Heart left ventricle (tissue), 16 donors: ENCODE measurements at regions of chr17 and their contacts with region 1.

Region 1: DNA sequence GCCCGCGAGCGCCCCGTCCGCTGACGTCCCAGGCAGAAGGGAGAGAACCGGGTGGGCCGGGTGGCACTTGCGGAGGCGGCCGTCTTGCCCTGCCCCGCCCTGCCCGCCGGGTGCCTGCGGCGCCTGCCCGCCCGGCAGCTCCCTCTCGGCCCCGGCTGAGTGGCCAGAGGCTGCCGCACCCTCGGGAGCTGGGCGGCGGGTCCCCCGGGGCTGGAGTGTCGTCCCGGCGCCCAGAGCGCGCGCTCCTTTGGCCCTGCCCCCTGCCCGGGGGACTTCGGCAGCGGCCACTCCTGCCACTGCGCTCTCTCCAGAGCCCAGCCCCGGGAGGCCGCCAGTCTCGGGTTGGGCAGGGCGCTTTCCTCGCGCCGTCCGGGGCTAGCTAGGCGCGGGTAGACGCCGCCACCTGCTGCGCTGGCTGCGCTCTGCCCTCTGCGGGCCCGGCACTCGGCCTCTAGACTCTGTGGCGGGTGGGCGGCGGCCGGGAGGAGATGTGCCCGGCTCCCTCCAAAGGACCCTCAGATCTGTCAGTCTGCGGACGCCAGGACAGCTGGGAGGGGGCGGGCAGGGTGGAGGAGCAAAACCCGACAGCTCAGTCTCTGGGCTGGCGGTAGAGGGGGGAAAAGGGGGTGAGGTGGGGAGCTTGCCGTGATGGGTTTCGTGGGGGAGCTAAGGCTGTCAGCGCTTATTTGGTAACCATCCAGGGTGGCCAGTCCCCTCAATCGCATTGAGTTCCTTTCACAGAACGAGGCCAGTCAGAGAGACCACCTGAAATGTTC is at the start of gene ST6GALNAC2:
- DNase-seq: peak; percentile 55 to 82 (median 78)
- ATAC-seq: peak; percentile 84 to 94 (median 94)
- H3K4me3 ChIP-seq: peak within 1 kb of the TSS; percentile 57 to 81 (median 64)
- H3K27ac ChIP-seq: peak within 1 kb of the TSS in 9 of 12 donors; percentile 5 to 68 (median 46)
- H3K4me1 ChIP-seq: peaks cover 0 to 25% (median 17%) of the 10 kb centered on the region in 12 donors
- H3K27me3 ChIP-seq: peaks cover 0 to 43% (median 3%) of the 10 kb centered on the region in 9 donors
- CTCF ChIP-seq: peak in 11 of 12 donors; percentile 15 to 65 (median 42)
- POLR2A ChIP-seq: no peak
- total RNA-seq, gene ST6GALNAC2: 3.3 to 7.8 (median 5.6) TPM

Region 2: GRCh38 chr17:76530095-76530718 is 55.8 kb before region 1 on chr17:
- intact Hi-C with region 1: no loop called
- DNase-seq: peak in 1 of 5 donors; percentile 91
- ATAC-seq: peak; percentile 33 to 65 (median 62)
- H3K4me3 ChIP-seq: peak overlapping the region in 5 of 12 donors; percentile 1 to 7 (median 4)
- H3K27ac ChIP-seq: peak overlapping the region; percentile 89 to 99 (median 95)
- H3K4me1 ChIP-seq: peaks cover 13 to 74% (median 48%) of the 10 kb centered on the region in 12 donors
- H3K27me3 ChIP-seq: no peaks in the 10 kb centered on the region
- CTCF ChIP-seq: no peak
- POLR2A ChIP-seq: peak in 1 of 2 donors; percentile 14

Region 3: DNA sequence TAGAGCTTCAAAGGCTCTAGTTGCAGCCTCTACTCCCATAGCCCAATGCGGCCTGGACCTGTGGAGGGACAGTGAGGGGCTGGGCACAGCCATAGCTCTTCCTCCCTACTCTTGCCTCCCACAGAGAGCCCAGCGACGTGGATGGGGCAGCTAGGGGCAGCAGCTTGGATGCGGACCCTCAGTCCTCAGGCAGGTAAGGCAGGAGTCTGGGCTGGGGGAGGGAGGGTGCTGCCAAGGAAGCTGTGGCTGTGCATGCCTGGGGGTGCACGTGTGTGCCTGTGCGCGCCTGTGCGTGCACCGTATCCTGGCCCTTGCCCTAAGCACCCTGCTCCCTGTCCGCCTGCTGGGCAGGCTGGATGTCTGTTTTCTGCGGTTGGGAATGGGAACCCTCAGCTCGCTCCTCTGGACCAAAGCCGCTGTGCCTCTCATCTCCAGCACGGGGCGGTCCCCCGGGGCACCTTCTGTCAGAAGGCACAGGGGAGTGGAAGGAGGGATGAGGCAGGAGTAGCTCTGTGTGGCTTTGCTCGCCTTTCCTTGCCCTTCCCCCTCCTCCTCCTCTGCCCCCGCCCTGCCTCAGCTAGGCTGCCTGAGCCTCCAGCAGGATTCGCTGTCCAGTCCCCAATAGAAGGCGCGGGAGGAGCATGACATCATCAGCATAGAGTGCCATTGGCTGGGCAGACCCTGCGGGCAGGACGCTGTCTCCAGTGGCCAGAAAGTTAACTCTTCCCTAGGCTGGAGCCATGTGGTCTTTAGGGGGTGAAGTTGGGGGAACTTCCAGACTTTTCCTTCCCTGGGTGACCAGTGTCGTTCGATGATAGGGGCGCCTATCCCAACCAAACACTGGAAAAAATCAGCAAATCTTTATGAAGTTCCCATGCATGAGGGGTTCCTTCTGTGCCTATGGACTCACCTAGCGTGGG is 45.4 kb before region 1 on chr17:
- intact Hi-C with region 1: no loop called
- DNase-seq: peak; percentile 93 to 97 (median 96)
- ATAC-seq: peak; percentile 91 to 97 (median 93)
- H3K4me3 ChIP-seq: peak overlapping the region in 11 of 12 donors; percentile 12 to 53 (median 44)
- H3K27ac ChIP-seq: peak overlapping the region in 11 of 12 donors; percentile 58 to 81 (median 76)
- H3K4me1 ChIP-seq: peaks cover 13 to 82% (median 55%) of the 10 kb centered on the region in 12 donors
- H3K27me3 ChIP-seq: peaks cover 0 to 38% (median 0%) of the 10 kb centered on the region in 9 donors
- CTCF ChIP-seq: peak in 5 of 12 donors; percentile 9 to 55 (median 39)
- POLR2A ChIP-seq: peak in 1 of 2 donors; percentile 48

Region 4: GRCh38 chr17:76623271-76624146 is 37.5 kb after region 1 on chr17:
- intact Hi-C with region 1: loop called in 1 of 10 experiments (anchors 5 kb)
- DNase-seq: peak; percentile 61 to 90 (median 72)
- ATAC-seq: peak; percentile 47 to 95 (median 90)
- H3K4me3 ChIP-seq: no peak overlapping the region
- H3K27ac ChIP-seq: no peak overlapping the region
- H3K4me1 ChIP-seq: peaks cover 0 to 7% (median 0%) of the 10 kb centered on the region in 12 donors
- H3K27me3 ChIP-seq: no peaks in the 10 kb centered on the region
- CTCF ChIP-seq: peak; percentile 93 to 98 (median 96)
- POLR2A ChIP-seq: no peak